Ascending aorta (tissue), 2 donors: ENCODE measurements at regions of chr4 and their contacts with region 1.

Region 1: GRCh38 chr4:70839589-70840093 is at the start of gene GRSF1:
- DNase-seq: peak; percentile 71 to 95
- H3K4me3 ChIP-seq: peak within 1 kb of the TSS; percentile 76 to 88
- H3K27ac ChIP-seq: peak within 1 kb of the TSS; percentile 88 to 95
- H3K4me1 ChIP-seq: peaks cover 5 to 13% of the 10 kb centered on the region in 2 donors
- H3K27me3 ChIP-seq: no peaks in the 10 kb centered on the region
- CTCF ChIP-seq: no peak
- total RNA-seq, gene GRSF1: 23.3 TPM

Region 2: DNA sequence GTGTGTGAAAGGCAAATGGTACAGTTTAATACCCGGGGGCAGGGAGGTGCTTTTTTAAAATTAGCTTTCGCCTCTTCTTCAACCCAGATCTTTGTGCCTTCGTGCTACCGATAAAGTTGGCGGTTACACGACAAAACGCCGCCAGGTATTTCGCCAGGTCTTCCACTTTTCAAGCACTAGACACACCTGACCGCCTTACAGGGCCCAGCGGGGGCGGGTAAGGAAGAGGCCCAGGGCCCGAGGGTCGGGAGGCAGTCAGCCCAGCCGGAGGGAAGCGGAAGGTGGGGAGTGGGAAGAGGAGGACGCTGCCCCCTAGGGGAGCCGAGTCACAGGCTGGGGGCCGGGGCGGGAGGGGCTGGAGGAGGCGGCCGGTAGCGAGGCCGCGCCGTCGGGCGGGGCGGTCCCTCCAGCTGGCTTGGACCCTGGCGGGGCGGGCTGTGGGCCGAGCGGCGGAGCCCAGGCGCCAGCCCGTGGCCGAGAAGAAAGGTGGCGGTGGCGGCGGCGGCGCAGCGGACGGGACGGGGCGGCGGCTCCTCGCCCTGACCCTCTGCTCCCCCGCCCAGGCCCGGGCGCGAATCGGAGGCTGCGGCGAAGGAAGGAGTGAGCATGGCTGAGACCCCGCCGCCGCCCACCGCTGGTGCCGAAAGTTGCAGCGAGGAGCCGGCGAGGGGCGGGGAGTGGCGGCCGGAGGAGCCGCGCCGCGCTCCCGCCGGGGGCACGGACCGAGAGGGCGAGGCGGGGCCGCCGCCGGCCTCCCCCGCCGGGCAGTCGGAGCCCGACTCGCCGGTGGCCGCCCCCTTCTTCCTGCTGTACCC is 135.1 kb before region 1 on chr4:
- intact Hi-C with region 1: loop called (anchors 1 kb)
- DNase-seq: peak; percentile 24 to 88
- H3K4me3 ChIP-seq: peak overlapping the region; percentile 89 to 98
- H3K27ac ChIP-seq: peak overlapping the region; percentile 92 to 96
- H3K4me1 ChIP-seq: peaks cover 0 to 11% of the 10 kb centered on the region in 2 donors
- H3K27me3 ChIP-seq: no peaks in the 10 kb centered on the region
- CTCF ChIP-seq: peak; percentile 13 to 54 (median 28)

Region 3: GRCh38 chr4:70901984-70902576 is 62.4 kb after region 1 on chr4 and contains the start of gene MOB1B:
- intact Hi-C with region 1: loop called (anchors 1 kb)
- DNase-seq: peak; percentile 49 to 91
- H3K4me3 ChIP-seq: peak within 1 kb of the TSS; percentile 83 to 86
- H3K27ac ChIP-seq: peak within 1 kb of the TSS; percentile 77 to 85
- H3K4me1 ChIP-seq: no peaks in the 10 kb centered on the region
- H3K27me3 ChIP-seq: no peaks in the 10 kb centered on the region
- CTCF ChIP-seq: peak; percentile 24 to 57 (median 54)
- total RNA-seq, gene MOB1B: 2.6 TPM

Region 4: GRCh38 chr4:70958681-70959080 is 119.0 kb after region 1 on chr4:
- intact Hi-C with region 1: loop called (anchors 5 kb)
- DNase-seq: no peak
- H3K4me3 ChIP-seq: no peak overlapping the region
- H3K27ac ChIP-seq: no peak overlapping the region
- H3K4me1 ChIP-seq: peaks cover 0 to 6% of the 10 kb centered on the region in 2 donors
- H3K27me3 ChIP-seq: no peaks in the 10 kb centered on the region
- CTCF ChIP-seq: no peak

Region 5: DNA sequence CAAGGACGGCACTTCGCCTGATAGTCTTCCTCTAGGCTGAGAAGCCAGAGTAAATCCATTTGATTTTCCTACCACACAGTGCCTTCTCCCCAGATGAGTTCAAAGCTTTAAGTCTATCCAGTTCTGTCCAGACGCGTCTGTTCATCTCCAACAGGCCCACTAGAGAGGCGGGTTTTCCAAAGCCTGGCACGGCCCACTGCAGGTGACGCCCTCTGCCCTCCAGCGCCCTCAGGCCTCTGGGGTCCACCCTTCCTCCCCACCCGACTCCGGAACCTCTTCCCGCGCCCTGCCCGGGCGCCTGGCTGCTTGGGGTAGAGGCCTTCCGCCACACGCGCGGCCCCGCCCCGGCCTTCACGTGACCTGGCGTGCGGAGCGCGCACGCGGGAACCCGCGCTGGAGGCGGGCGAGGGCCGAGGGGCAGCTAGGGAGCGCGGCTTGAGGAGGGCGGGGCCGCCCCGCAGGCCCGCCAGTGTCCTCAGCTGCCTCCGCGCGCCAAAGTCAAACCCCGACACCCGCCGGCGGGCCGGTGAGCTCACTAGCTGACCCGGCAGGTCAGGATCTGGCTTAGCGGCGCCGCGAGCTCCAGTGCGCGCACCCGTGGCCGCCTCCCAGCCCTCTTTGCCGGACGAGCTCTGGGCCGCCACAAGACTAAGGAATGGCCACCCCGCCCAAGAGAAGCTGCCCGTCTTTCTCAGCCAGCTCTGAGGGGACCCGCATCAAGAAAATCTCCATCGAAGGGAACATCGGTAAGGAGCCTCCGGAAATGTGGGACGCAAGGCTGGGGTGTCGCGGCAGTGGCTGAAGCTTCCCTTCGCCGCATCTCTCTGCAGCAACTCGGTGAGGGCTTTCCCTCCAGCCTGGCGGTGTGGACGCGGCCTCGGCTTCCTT is 153.8 kb after region 1 on chr4 and contains the start of gene DCK:
- intact Hi-C with region 1: loop called (anchors 1 kb)
- DNase-seq: peak; percentile 61 to 95
- H3K4me3 ChIP-seq: peak within 1 kb of the TSS; percentile 73 to 75
- H3K27ac ChIP-seq: peak within 1 kb of the TSS; percentile 76 to 86
- H3K4me1 ChIP-seq: peaks cover 6% of the 10 kb centered on the region in 2 donors
- H3K27me3 ChIP-seq: no peaks in the 10 kb centered on the region
- CTCF ChIP-seq: no peak
- total RNA-seq, gene DCK: 24.5 TPM

Region 6: GRCh38 chr4:71009890-71010588 is 170.4 kb after region 1 on chr4:
- intact Hi-C with region 1: loop called (anchors 5 kb)
- DNase-seq: no peak
- H3K4me3 ChIP-seq: no peak overlapping the region
- H3K27ac ChIP-seq: no peak overlapping the region
- H3K4me1 ChIP-seq: no peaks in the 10 kb centered on the region
- H3K27me3 ChIP-seq: no peaks in the 10 kb centered on the region
- CTCF ChIP-seq: peak in 1 of 3 experiments; percentile 50